Heart left ventricle (tissue), 16 donors: ENCODE measurements at regions of chr6 and their contacts with region 1.

Region 1: DNA sequence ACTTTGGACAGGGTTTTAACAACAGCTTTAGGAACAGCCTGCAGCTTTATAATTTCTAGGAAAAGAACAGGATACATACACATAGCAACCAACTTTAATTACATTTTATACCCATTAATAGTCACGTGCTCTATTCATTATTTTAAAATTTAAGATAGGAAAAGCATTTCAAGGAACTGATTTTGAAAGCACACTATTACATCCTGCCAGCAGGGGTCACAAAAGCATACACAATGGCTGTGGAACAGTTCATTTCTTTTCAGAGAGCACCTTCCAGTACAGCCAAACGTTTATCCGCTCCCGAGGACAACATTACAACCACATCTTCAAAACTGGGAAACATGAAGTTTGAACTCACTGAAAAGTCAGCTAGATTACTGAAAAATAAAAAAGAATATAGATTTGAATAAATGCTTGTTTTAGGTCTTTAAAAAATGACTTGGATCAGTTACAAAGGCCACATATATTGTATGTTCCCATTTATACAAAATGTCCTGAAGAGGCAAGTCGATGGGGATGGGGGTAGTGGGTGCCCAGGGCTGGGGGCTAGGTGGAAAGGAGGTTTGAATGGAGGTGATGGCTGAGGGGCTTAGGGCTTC is 104.6 kb upstream of the EXOC2 start:
- DNase-seq: peak in 2 of 5 donors; percentile 23 to 32
- ATAC-seq: peak in 2 of 4 donors; percentile 53 to 65
- H3K4me3 ChIP-seq: no peak overlapping the region
- H3K27ac ChIP-seq: no peak overlapping the region
- H3K4me1 ChIP-seq: no peaks in the 10 kb centered on the region
- H3K27me3 ChIP-seq: peaks cover 0 to 82% (median 39%) of the 10 kb centered on the region in 9 donors
- CTCF ChIP-seq: peak; percentile 63 to 88 (median 80)
- POLR2A ChIP-seq: no peak

Region 2: GRCh38 chr6:1062786-1063545 is 265.4 kb after region 1 on chr6:
- intact Hi-C with region 1: loop called in 1 of 10 experiments (anchors 10 kb)
- DNase-seq: no peak
- ATAC-seq: no peak
- H3K4me3 ChIP-seq: no peak overlapping the region
- H3K27ac ChIP-seq: no peak overlapping the region
- H3K4me1 ChIP-seq: no peaks in the 10 kb centered on the region
- H3K27me3 ChIP-seq: peaks cover 0 to 6% (median 0%) of the 10 kb centered on the region in 9 donors
- CTCF ChIP-seq: no peak
- POLR2A ChIP-seq: no peak

Region 3: GRCh38 chr6:1381481-1382330 is 584.1 kb after region 1 on chr6:
- intact Hi-C with region 1: loop called (anchors 1 to 5 kb)
- DNase-seq: peak in 1 of 5 donors; percentile 47
- ATAC-seq: peak; percentile 26 to 87 (median 70)
- H3K4me3 ChIP-seq: peak overlapping the region in 10 of 12 donors; percentile 10 to 46 (median 37)
- H3K27ac ChIP-seq: peak overlapping the region in 1 of 12 donors; percentile 84
- H3K4me1 ChIP-seq: peaks cover 0 to 50% (median 26%) of the 10 kb centered on the region in 12 donors
- H3K27me3 ChIP-seq: peaks cover 88 to 100% (median 97%) of the 10 kb centered on the region in 9 donors
- CTCF ChIP-seq: peak; percentile 62 to 94 (median 90)
- POLR2A ChIP-seq: no peak

Region 4: GRCh38 chr6:1396952-1397868 is 599.6 kb after region 1 on chr6:
- intact Hi-C with region 1: loop called in 9 of 10 experiments (anchors 1 to 5 kb)
- DNase-seq: peak in 4 of 5 donors; percentile 34 to 72 (median 56)
- ATAC-seq: peak in 2 of 4 donors; percentile 66 to 68
- H3K4me3 ChIP-seq: no peak overlapping the region
- H3K27ac ChIP-seq: no peak overlapping the region
- H3K4me1 ChIP-seq: peaks cover 0 to 19% (median 5%) of the 10 kb centered on the region in 12 donors
- H3K27me3 ChIP-seq: peaks cover 18 to 98% (median 75%) of the 10 kb centered on the region in 9 donors
- CTCF ChIP-seq: peak; percentile 84 to 97 (median 95)
- POLR2A ChIP-seq: no peak

Region 5: GRCh38 chr6:1436334-1437306 is 639.0 kb after region 1 on chr6:
- intact Hi-C with region 1: loop called in 1 of 10 experiments (anchors 5 kb)
- DNase-seq: no peak
- ATAC-seq: peak; percentile 69 to 84 (median 80)
- H3K4me3 ChIP-seq: no peak overlapping the region
- H3K27ac ChIP-seq: no peak overlapping the region
- H3K4me1 ChIP-seq: peaks cover 0 to 5% (median 0%) of the 10 kb centered on the region in 12 donors
- H3K27me3 ChIP-seq: peaks cover 0 to 54% (median 23%) of the 10 kb centered on the region in 9 donors
- CTCF ChIP-seq: peak; percentile 63 to 81 (median 72)
- POLR2A ChIP-seq: no peak